OCI-LY7 (cell line): ENCODE measurements at regions of chr16 and their contacts with region 1.

Region 1: GRCh38 chr16:8880839-8881510 is 1.2 kb upstream of the LITAFD start:
- DNase-seq: no peak
- H3K4me3 ChIP-seq: no peak overlapping the region
- H3K27ac ChIP-seq: no peak overlapping the region
- H3K4me1 ChIP-seq: peaks cover 14% of the 10 kb centered on the region
- CTCF ChIP-seq: no peak

Region 2: DNA sequence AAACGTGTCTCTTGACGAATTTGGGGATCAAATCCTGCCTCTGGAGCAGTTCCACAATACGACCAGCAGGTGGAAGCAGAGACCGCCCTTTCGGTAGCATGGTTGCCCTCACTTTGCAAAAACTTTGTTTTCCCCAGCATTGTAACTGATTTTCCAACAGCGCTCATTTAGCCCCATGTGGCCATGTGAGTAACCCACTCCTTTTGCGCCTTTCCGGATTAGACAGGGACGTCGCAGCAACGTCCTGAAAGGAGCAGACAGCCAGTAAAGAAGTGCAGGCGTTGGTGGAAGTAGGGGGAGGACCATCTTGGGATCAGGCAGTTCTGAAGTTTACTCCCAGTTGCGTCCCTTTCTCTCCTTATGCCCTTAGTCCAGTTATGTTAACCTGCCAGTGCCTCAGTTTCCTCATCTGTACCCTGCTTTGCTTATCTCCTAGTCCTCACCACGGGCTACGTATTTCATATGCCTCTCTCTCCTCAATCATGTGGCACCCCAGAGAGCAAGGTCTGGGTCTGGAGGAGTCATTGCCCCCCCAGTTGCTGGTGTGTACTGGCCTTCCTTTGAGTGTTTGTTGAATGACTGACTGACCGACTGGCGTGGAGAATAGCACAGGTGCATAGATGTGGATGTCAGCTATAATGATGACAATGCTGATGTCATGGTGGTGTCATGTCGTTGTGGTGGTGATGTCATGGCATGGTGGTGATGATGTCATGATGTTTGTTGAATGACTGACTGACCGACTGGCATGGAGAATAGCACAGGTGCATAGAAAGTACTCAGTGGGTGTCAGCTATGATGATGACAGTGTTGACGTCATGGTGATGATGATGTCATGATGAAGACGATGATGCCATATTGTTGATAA is 313.0 kb before region 1 on chr16:
- CTCF ChIA-PET with region 1: no interaction called
- POLR2A ChIA-PET with region 1: no interaction called
- intact Hi-C with region 1: loop called (anchors 1 kb)
- DNase-seq: peak; percentile 91
- H3K4me3 ChIP-seq: no peak overlapping the region
- H3K27ac ChIP-seq: no peak overlapping the region
- H3K4me1 ChIP-seq: no peaks in the 10 kb centered on the region
- CTCF ChIP-seq: peak; percentile 99

Region 3: DNA sequence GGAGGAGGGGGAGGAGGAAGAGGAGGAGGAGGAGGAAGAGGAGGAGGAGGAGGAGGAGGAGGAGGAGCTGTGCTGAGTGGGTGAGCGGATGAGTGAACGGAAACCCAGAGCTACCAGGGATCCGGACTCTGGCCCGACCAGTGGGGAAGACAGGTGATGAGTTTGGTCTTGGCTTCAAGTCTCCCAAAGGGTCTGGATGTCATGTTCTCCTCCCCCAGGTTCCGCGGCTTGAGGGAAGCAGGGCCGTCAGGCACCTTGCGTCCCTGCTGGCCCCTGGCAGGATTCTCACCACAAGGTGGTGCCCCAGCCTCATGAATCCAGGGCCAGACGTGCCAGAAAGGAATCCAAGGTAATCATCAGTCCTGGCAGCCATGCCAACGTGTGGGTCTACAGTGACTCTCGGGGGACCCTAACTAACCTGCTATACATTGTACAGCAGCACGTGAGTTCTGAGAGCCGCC is 220.1 kb before region 1 on chr16:
- CTCF ChIA-PET with region 1: no interaction called
- POLR2A ChIA-PET with region 1: interaction called, 3 read pairs
- intact Hi-C with region 1: loop called (anchors 1 kb)
- DNase-seq: peak; percentile 59
- H3K4me3 ChIP-seq: no peak overlapping the region
- H3K27ac ChIP-seq: no peak overlapping the region
- H3K4me1 ChIP-seq: no peaks in the 10 kb centered on the region
- CTCF ChIP-seq: peak; percentile 73

Region 4: DNA sequence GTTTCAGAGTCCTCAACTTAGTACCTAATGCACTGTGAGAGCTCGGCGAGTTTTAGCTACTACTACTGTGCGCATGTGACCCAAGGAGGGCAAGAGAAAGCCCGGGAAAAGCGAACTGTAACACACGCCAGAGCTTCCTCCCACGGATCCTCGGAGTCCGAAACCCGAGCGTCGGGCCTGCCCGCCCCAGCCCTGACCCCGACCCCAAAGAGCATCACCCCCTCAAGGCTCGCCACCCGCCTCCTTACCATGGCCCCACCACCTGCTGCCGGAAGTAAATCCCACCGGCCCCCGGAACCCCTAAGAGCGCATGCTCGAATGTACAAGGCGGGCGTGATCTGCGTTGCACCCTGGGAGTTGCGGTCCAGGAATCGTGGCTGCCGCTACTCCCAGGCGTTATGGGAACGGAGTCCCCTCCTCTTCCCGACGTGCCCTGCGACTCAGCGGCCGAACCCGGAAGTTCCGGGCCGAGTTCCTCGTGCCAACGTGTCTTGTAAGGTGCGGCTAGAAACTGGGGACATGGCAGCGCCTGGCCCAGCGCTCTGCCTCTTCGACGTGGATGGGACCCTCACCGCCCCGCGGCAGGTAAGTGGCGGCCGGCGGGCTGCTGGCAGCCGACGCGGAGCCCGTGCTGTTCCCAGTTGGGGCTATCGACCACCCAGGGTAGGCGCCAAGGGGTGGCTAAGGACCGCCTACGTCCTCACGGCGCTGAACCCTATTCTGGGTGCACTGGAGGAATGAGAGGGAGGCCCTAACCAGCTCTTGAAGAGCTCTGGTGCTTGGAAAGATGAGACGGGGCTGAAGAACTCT is 83.4 kb before region 1 on chr16 and contains the starts of genes PMM2 and TMEM186:
- CTCF ChIA-PET with region 1: no interaction called
- POLR2A ChIA-PET with region 1: no interaction called
- intact Hi-C with region 1: loop called (anchors 5 kb)
- DNase-seq: peak; percentile 98
- H3K4me3 ChIP-seq: peak within 1 kb of the TSS; percentile 90
- H3K27ac ChIP-seq: peak within 1 kb of the TSS; percentile 39
- H3K4me1 ChIP-seq: peaks cover 32% of the 10 kb centered on the region
- CTCF ChIP-seq: no peak
- total RNA-seq, gene PMM2: 39.1 and 41.1 TPM in 2 replicates
- total RNA-seq, gene TMEM186: 8.5 and 11.7 TPM in 2 replicates

Region 5: DNA sequence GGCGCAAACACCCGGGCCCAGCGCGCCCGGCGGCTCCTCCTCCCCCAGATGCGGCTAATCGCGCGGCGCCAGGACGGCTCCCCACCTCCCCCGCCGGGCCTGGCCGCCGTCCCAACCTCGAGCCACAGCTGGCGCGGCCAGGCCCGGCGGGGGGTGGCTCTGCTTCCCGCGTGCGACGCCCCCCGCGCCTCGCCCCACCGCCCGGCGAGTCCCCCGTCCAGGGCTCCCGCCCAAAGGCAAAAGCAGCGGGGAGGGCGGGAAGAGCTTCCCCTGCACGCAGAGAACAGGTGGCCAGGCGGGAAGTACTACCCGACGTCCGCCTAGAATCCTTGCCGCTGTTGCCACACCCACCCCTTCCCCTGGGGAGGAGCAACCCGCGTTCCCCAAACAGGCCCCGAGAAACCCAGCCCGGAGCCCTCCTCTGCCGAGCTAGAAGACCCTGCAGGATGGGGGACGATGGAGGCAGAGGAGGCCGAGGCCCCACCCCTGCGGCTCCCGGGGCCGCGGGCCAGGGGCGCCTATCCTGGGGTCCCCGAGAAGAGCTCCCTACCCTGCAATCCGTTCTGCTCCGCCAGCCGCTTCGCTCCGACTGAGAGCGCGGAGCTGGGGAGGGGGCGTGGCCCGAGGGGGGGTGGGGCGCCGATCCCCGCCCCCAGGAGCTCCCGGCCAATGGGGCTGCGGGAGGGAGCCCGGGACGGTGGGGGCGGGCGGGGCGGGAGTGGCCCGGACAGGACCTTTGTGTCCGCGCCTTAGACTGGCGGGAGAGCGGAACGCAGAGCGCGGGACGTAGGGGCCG is 12.4 kb before region 1 on chr16 and contains the start of gene CARHSP1:
- CTCF ChIA-PET with region 1: interaction called, 3 read pairs
- POLR2A ChIA-PET with region 1: interaction called, 3 read pairs
- intact Hi-C with region 1: loop called (anchors 1 kb)
- DNase-seq: peak; percentile 94
- H3K4me3 ChIP-seq: peak within 1 kb of the TSS; percentile 92
- H3K27ac ChIP-seq: peak within 1 kb of the TSS; percentile 89
- H3K4me1 ChIP-seq: peaks cover 63% of the 10 kb centered on the region
- CTCF ChIP-seq: no peak
- total RNA-seq, gene CARHSP1: 236 and 241 TPM in 2 replicates

Region 6: DNA sequence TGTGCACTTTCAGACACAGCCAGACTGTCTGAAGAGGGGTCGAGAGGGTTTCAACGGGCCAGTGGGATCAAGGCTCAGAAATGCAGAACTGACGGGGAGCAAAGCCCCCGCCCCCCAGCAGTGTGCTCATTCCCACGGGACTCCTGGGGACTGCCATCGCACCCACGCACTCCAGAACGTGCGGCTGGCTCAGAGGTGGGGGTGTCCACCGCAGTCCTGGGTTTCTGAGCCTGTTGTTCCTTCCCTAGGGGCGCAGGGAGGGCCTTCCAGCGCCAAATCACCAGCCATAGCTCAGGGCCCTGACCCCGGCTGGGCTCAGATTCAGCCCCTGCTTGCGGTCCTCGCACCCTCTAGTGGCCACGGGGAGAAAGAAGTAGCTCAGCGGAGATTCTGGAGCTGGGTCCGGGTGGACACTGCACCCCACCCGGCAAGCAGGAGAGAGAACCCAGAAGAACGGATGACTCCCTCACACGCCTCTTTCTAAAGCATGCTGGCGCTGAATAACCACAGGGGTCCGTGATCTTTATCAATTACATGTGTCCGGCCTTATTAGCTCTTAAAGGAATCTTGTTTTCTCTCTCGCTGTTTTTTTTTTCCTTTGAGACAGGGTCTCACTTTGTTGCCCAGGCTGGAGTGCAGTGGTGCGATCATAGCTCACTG is 127.8 kb after region 1 on chr16:
- CTCF ChIA-PET with region 1: no interaction called
- POLR2A ChIA-PET with region 1: no interaction called
- intact Hi-C with region 1: loop called (anchors 2 kb)
- DNase-seq: peak; percentile 68
- H3K4me3 ChIP-seq: no peak overlapping the region
- H3K27ac ChIP-seq: no peak overlapping the region
- H3K4me1 ChIP-seq: no peaks in the 10 kb centered on the region
- CTCF ChIP-seq: peak; percentile 86